PC-9 (cell line): ENCODE measurements at regions of chr9 and their contacts with region 1.

Region 1: GRCh38 chr9:81737853-81738507 is 48.6 kb upstream of the TLE1 start:
- DNase-seq: peak; percentile 76 to 97
- H3K4me3 ChIP-seq: no peak overlapping the region
- H3K27ac ChIP-seq: peak overlapping the region; percentile 97
- H3K4me1 ChIP-seq: peaks cover 39% of the 10 kb centered on the region
- H3K27me3 ChIP-seq: no peaks in the 10 kb centered on the region
- CTCF ChIP-seq: no peak

Region 2: DNA sequence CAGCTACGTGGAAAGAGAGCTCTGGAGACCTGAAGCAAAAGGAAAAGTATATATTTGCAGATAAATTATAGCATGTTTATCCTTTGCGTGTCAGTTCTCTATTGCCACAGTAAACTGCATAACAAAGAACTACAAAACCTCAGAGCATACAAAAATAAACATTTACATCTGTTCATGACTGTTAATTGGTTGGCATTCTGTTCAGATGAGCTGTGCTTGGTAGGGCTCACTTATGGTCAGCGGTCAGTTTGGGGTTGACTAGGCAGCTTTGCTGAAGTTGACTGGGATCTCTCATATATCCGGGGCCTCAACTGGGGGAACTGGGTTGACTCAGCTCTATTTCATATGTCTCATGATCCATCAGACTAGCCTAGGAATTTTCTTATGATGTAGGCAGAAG is 306.3 kb before region 1 on chr9:
- CTCF ChIA-PET with region 1: no interaction called
- POLR2A ChIA-PET with region 1: no interaction called
- intact Hi-C with region 1: no loop called
- DNase-seq: no peak
- H3K4me3 ChIP-seq: no peak overlapping the region
- H3K27ac ChIP-seq: no peak overlapping the region
- H3K4me1 ChIP-seq: no peaks in the 10 kb centered on the region
- H3K27me3 ChIP-seq: no peaks in the 10 kb centered on the region
- CTCF ChIP-seq: no peak

Region 3: DNA sequence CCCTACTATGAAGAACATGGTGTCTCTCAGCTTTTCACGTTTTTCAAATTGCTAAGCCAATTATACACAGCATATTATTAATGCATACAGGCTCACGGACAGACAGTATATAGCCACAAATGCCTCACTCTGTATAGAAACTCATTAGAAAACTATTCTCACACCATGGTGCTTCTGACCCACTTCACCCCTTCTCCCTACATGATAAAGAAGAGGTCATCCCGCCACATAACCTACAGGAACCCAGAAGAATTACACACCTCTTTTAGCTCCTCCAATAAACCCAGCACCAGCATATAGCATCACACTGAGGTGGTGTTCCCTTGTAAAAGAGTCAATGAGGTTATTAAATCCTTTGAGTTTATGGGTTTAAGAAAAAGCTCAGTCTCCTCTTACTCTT is 54.3 kb before region 1 on chr9:
- CTCF ChIA-PET with region 1: no interaction called
- POLR2A ChIA-PET with region 1: interaction called, 20 read pairs
- intact Hi-C with region 1: no loop called
- DNase-seq: no peak
- H3K4me3 ChIP-seq: no peak overlapping the region; the same call in 1 of the 2 replicates
- H3K27ac ChIP-seq: no peak overlapping the region
- H3K4me1 ChIP-seq: peaks cover 32% of the 10 kb centered on the region
- H3K27me3 ChIP-seq: no peaks in the 10 kb centered on the region
- CTCF ChIP-seq: no peak

Region 4: GRCh38 chr9:81724242-81724889 is 13.6 kb before region 1 on chr9:
- CTCF ChIA-PET with region 1: no interaction called
- POLR2A ChIA-PET with region 1: no interaction called
- intact Hi-C with region 1: no loop called
- DNase-seq: no peak
- H3K4me3 ChIP-seq: no peak overlapping the region
- H3K27ac ChIP-seq: no peak overlapping the region
- H3K4me1 ChIP-seq: peaks cover 12% of the 10 kb centered on the region
- H3K27me3 ChIP-seq: no peaks in the 10 kb centered on the region
- CTCF ChIP-seq: no peak

Region 5: DNA sequence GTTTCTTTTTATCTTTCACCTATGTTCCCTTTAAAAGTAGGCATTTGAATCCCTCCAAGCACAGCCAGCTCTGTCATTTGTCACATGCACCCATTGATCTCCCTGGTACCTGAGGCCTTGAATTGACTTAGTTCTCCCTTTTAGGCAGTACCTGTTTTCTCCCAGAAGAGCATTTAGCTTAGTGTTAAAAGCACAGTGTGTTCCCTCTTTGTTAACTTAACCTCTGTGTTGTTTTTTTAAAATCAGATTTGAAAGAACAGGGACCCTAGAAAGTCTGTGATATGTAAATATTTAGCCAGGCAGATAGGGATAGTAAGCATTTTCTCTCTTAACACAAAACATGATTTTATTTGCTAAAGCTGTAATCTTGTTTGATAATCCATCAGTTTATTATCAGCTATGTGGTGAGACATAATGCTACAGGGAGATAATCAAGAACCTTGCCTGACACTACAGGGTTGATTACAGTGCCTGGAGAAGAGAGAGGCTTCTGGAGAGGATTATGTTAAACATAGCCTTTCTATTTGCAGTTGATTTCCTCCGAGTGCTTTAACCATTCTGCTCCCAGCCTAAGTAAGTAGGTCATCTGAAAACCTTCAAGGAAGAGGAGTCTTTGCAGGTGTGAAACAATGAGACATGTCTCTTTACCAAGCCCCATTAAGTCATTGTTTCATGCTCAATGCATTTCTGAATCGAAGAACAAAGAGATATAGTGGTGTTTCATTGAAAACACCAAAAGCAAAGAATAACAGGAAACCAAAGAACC is 76.6 kb after region 1 on chr9:
- CTCF ChIA-PET with region 1: interaction called, 11 read pairs
- POLR2A ChIA-PET with region 1: no interaction called
- intact Hi-C with region 1: no loop called
- DNase-seq: no peak
- H3K4me3 ChIP-seq: no peak overlapping the region
- H3K27ac ChIP-seq: no peak overlapping the region
- H3K4me1 ChIP-seq: no peaks in the 10 kb centered on the region
- H3K27me3 ChIP-seq: no peaks in the 10 kb centered on the region
- CTCF ChIP-seq: no peak

Region 6: GRCh38 chr9:81825846-81826516 is 88.0 kb after region 1 on chr9:
- CTCF ChIA-PET with region 1: no interaction called
- POLR2A ChIA-PET with region 1: interaction called, 3 read pairs
- intact Hi-C with region 1: loop called (anchors 1 kb)
- DNase-seq: peak; percentile 51 to 88
- H3K4me3 ChIP-seq: no peak overlapping the region
- H3K27ac ChIP-seq: peak overlapping the region; percentile 91
- H3K4me1 ChIP-seq: peaks cover 39% of the 10 kb centered on the region
- H3K27me3 ChIP-seq: no peaks in the 10 kb centered on the region
- CTCF ChIP-seq: no peak